ENCODE measurements at regions of chr6 and their contacts with region 1.

Region 1: GRCh38 chr6:158213925-158214674 is 46.0 kb downstream of the GTF2H5 start:
- DNase-seq: peak; percentile 70
- H3K4me3 Mint-ChIP-seq: no peak overlapping the region
- H3K27ac Mint-ChIP-seq: no peak overlapping the region
- H3K4me1 Mint-ChIP-seq: peaks cover 13% of the 10 kb centered on the region
- H3K27me3 Mint-ChIP-seq: no peaks in the 10 kb centered on the region

Region 2: GRCh38 chr6:158387036-158387435 is 172.9 kb after region 1 on chr6:
- CTCF ChIA-PET with region 1: interaction called, 10 read pairs
- POLR2A ChIA-PET with region 1: no interaction called
- intact Hi-C with region 1: no loop called
- DNase-seq: no peak
- H3K4me3 Mint-ChIP-seq: no peak overlapping the region
- H3K27ac Mint-ChIP-seq: no peak overlapping the region
- H3K4me1 Mint-ChIP-seq: no peaks in the 10 kb centered on the region
- H3K27me3 Mint-ChIP-seq: no peaks in the 10 kb centered on the region

Region 3: GRCh38 chr6:158518191-158519127 is 304.4 kb after region 1 on chr6:
- CTCF ChIA-PET with region 1: interaction called, 25 read pairs
- POLR2A ChIA-PET with region 1: no interaction called
- intact Hi-C with region 1: no loop called
- DNase-seq: peak; percentile 75
- H3K4me3 Mint-ChIP-seq: peak overlapping the region; percentile 85
- H3K27ac Mint-ChIP-seq: peak overlapping the region; percentile 83
- H3K4me1 Mint-ChIP-seq: peaks cover 25% of the 10 kb centered on the region
- H3K27me3 Mint-ChIP-seq: peaks cover 6% of the 10 kb centered on the region

Region 4: DNA sequence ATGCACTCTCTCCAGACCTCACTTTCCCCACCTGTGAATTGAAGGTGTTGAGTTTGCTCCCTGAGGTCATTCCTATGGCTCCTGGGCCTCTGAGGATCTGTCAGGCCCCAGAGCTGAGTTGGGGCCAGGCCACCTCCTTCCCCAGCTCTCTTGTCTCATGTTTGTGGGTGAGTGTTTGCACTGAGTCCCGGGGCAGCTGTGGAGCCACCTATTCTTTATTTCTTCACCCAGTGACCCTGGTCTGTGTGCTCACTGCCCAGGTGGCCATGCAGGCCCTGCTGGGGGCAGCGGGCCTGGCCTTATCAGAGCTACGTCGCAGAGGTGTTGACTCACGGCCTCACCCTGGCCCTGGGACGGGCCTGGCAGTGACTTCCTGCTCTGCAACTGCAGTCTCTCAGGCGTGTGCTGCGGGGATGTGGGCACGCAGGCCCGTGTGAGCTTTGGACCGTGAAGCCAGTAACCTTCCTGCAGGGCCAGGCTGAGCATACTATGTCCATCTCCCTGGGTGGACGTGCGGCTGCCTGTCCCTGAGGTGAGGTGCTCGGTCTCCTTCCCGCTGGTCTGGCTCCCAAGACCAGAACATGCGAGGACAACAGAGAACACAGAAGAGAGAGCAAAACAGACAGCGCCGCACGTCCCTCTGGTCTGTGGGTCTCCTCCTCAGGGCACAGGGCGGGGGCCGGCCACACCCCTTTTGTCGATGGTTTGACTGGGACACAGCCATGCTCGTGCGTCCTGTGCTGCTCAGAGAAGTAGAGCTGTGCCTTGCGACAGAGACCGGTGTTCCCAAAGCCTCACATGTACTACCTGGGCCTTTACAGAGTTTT is 357.9 kb after region 1 on chr6:
- CTCF ChIA-PET with region 1: interaction called, 12 read pairs
- POLR2A ChIA-PET with region 1: interaction called, 4 read pairs
- intact Hi-C with region 1: no loop called
- DNase-seq: no peak
- H3K4me3 Mint-ChIP-seq: no peak overlapping the region
- H3K27ac Mint-ChIP-seq: no peak overlapping the region
- H3K4me1 Mint-ChIP-seq: peaks cover 62% of the 10 kb centered on the region
- H3K27me3 Mint-ChIP-seq: no peaks in the 10 kb centered on the region

Region 5: GRCh38 chr6:158595223-158595622 is 381.1 kb after region 1 on chr6:
- CTCF ChIA-PET with region 1: interaction called, 17 read pairs
- POLR2A ChIA-PET with region 1: no interaction called
- intact Hi-C with region 1: no loop called
- DNase-seq: no peak
- H3K4me3 Mint-ChIP-seq: no peak overlapping the region
- H3K27ac Mint-ChIP-seq: no peak overlapping the region
- H3K4me1 Mint-ChIP-seq: peaks cover 8% of the 10 kb centered on the region
- H3K27me3 Mint-ChIP-seq: no peaks in the 10 kb centered on the region

Region 6: DNA sequence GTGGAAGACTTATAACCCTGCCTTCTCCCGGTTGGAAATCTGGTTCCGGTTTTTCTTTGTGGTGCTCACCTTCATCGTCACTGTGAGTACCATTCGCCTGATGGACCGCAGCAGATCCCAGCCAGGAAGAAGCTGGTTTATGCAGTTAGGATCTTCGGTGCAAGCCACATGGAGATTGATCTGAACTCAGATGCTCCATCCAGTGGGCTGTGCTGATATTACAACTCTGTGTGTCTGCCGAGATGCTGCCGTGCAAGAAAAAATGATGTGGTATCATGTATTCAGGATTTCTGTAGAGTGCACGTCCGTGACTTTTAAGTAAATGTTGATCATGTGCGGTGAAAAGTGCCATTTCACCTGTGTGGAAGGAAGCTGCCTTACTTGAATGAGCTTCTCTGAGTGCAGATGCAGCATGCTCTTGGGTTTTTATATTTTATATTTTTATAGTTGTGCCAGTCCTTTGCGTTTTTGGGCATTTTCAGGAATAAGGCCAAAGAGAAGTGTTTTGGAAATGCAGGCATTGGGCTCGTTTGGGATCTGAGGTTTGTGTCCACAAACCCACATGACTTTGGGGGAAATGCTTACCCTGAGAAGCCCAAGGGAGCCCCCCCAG is 391.3 kb after region 1 on chr6:
- CTCF ChIA-PET with region 1: interaction called, 29 read pairs
- POLR2A ChIA-PET with region 1: no interaction called
- intact Hi-C with region 1: loop called (anchors 1 kb)
- DNase-seq: peak; percentile 70
- H3K4me3 Mint-ChIP-seq: no peak overlapping the region
- H3K27ac Mint-ChIP-seq: no peak overlapping the region
- H3K4me1 Mint-ChIP-seq: no peaks in the 10 kb centered on the region
- H3K27me3 Mint-ChIP-seq: no peaks in the 10 kb centered on the region

Region 7: GRCh38 chr6:158686791-158687381 is 472.8 kb after region 1 on chr6:
- CTCF ChIA-PET with region 1: interaction called, 22 read pairs
- POLR2A ChIA-PET with region 1: no interaction called
- intact Hi-C with region 1: no loop called
- DNase-seq: peak; percentile 38
- H3K4me3 Mint-ChIP-seq: no peak overlapping the region
- H3K27ac Mint-ChIP-seq: peak overlapping the region; percentile 47
- H3K4me1 Mint-ChIP-seq: peaks cover 64% of the 10 kb centered on the region
- H3K27me3 Mint-ChIP-seq: no peaks in the 10 kb centered on the region

Measured in activated CD4-positive, alpha-beta memory T cell treated with anti-CD3 and anti-CD28 coated beads for 36 hours (primary cell).